Endothelial cell of umbilical vein (primary cell): ENCODE measurements at regions of chr6 and their contacts with region 1.

Region 1: DNA sequence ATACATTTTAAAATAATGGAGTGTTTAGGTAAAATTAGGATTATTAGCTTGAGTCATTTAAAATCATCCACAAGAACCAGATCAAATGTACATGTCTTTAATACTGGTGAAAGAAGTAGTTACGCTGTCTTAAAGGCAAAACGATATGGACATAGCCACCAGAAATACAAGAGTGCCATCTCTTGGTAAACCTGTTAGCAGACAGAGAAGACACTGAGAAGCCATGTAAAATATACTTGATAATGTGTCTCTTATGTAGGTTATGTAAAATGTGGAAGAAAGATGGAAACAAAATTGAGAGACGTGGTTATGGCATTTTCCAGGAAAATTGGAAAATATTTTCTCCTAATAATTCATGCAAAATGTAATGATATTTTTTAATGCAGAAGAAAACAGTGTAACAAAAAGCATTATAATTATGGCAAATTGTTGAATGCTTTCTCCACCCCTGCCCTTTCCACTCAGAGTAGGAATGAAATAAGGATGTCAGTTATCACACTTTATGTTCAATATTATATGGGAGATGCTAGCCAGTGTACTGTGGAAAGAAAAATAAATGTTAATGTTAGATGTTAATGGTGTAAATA is 12.2 kb upstream of the SLC17A2 start:
- DNase-seq: peak; percentile 50
- H3K4me3 ChIP-seq: no peak overlapping the region
- H3K27ac ChIP-seq: no peak overlapping the region
- H3K4me1 ChIP-seq: no peaks in the 10 kb centered on the region
- H3K27me3 ChIP-seq: no peaks in the 10 kb centered on the region
- CTCF ChIP-seq: peak; percentile 10 to 17
- POLR2A ChIP-seq: no peak

Region 2: GRCh38 chr6:25788305-25788922 is 154.2 kb before region 1 on chr6:
- CTCF ChIA-PET with region 1: interaction called, 24 read pairs
- POLR2A ChIA-PET with region 1: no interaction called
- dilution Hi-C with region 1: no loop called
- intact Hi-C with region 1: loop called (anchors 1 kb)
- DNase-seq: peak; percentile 69
- H3K4me3 ChIP-seq: no peak overlapping the region
- H3K27ac ChIP-seq: no peak overlapping the region
- H3K4me1 ChIP-seq: no peaks in the 10 kb centered on the region
- H3K27me3 ChIP-seq: no peaks in the 10 kb centered on the region
- CTCF ChIP-seq: peak; percentile 63 to 64
- POLR2A ChIP-seq: no peak

Region 3: DNA sequence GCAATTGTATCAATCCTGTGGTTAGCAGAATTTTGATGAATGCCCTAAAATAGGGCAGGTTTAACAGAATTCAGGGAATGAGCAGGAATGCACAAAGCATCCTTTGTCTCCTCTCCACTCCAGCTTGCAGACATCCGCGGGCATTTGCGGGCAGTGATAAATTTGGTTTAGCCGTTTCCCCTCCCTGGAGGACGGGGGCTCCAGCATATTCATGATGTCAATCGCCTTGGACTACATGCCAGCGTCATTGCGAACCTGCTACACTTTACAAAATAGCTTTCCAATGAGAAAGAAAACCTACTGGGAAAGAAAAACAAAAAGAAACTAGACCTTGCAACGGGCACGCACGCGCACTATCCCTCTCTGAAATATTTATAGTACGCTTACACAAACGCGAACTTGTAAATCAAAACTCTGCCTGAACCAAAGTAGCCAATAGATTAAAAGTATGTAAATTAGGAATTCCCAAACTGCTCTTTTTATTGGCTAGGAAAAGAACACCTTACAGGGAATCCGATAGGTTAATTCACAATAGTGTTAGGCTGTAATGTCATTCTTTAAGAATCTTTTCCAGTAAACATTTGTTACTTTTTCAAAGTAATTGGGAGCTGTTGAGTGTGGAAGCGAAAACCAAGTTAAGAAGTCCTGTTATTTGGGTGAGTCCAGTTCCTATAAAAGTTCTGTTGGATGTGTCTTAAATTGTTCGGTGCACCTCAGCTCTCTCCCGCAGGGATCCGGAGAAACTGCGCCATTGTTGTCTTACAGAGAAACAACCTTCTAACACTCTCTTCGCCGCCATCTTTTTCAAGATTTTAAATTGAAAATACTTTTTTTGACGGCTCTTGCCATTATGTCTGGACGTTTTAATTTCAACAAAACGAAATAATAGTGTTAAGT is 281.2 kb after region 1 on chr6:
- CTCF ChIA-PET with region 1: no interaction called
- POLR2A ChIA-PET with region 1: no interaction called
- dilution Hi-C with region 1: no loop called
- intact Hi-C with region 1: no loop called
- DNase-seq: peak; percentile 94
- H3K4me3 ChIP-seq: peak overlapping the region; percentile 47 to 94 (median 77)
- H3K27ac ChIP-seq: peak overlapping the region; percentile 96
- H3K4me1 ChIP-seq: peaks cover 14% of the 10 kb centered on the region
- H3K27me3 ChIP-seq: no peaks in the 10 kb centered on the region
- CTCF ChIP-seq: no peak
- POLR2A ChIP-seq: peak; percentile 71